ENCODE measurements at regions of chr17 and their contacts with region 1.

Region 1: GRCh38 chr17:27601069-27601975 is 29.7 kb upstream of the LGALS9 start:
- DNase-seq: no peak
- H3K4me3 ChIP-seq: no peak overlapping the region
- H3K27ac ChIP-seq: no peak overlapping the region
- H3K4me1 ChIP-seq: no peaks in the 10 kb centered on the region
- H3K27me3 ChIP-seq: no peaks in the 10 kb centered on the region
- CTCF ChIP-seq: peak; percentile 76 to 97 (median 87)
- POLR2A ChIP-seq: no peak

Region 2: DNA sequence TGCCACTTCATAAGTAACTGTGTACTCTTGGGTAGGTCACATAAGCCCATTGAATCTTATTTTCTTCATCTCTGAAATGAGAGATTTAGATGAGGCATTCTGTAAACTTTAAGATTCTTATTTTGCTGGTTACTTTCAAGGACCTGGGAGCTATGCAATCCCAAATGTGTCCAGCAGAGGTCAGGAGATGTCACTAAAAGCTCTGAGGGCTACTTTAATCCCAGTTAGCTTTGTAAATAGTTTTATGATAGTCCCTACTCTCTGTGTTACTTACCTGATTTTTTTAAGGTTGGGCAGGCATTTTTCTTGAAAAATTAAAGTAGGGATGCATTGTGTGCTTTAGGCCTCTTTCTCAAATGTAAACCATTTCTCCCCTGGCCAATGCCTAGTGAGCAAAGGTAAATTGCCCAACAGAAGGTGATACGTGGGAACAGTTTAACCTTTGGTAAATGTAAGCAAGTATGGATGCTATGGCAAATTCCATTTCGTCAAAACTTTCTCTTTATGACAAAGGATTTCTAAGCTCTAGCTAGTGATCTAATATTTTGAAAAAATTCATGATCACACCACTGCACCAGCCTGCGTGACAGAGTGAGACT is 364.5 kb before region 1 on chr17:
- intact Hi-C with region 1: loop called (anchors 5 kb)
- DNase-seq: no peak
- H3K4me3 ChIP-seq: no peak overlapping the region
- H3K27ac ChIP-seq: no peak overlapping the region
- H3K4me1 ChIP-seq: peaks cover 10% of the 10 kb centered on the region
- H3K27me3 ChIP-seq: no peaks in the 10 kb centered on the region
- CTCF ChIP-seq: peak; percentile 67 to 96 (median 90)
- POLR2A ChIP-seq: no peak

Measured in vagina (tissue), 2 donors.